ENCODE measurements at regions of chr4 and their contacts with region 1.

Region 1: GRCh38 chr4:22389240-22389870 is 126.5 kb downstream of the ADGRA3 start:
- DNase-seq: no peak
- H3K4me3 ChIP-seq: no peak overlapping the region
- H3K27ac ChIP-seq: no peak overlapping the region
- H3K4me1 ChIP-seq: peaks cover 0 to 16% (median 8%) of the 10 kb centered on the region in 4 donors
- H3K27me3 ChIP-seq: no peaks in the 10 kb centered on the region
- CTCF ChIP-seq: peak; percentile 52 to 80 (median 68)
- EP300 ChIP-seq: no peak
- POLR2A ChIP-seq: no peak

Region 2: GRCh38 chr4:21948347-21949072 is 440.8 kb before region 1 on chr4 and contains the start of gene KCNIP4:
- intact Hi-C with region 1: loop called (anchors 10 kb)
- DNase-seq: no peak
- H3K4me3 ChIP-seq: peak within 1 kb of the TSS; percentile 57 to 69 (median 60)
- H3K27ac ChIP-seq: peak within 1 kb of the TSS in 1 of 4 donors; percentile 56
- H3K4me1 ChIP-seq: peaks cover 0 to 13% (median 5%) of the 10 kb centered on the region in 4 donors
- H3K27me3 ChIP-seq: peaks cover 0 to 18% (median 0%) of the 10 kb centered on the region in 3 donors
- CTCF ChIP-seq: no peak
- EP300 ChIP-seq: no peak
- POLR2A ChIP-seq: no peak
- total RNA-seq, gene KCNIP4: 9.1 to 28.5 (median 19.4) TPM

Region 3: GRCh38 chr4:22539251-22539650 is 149.9 kb after region 1 on chr4:
- intact Hi-C with region 1: no loop called
- DNase-seq: no peak
- H3K4me3 ChIP-seq: no peak overlapping the region
- H3K27ac ChIP-seq: no peak overlapping the region
- H3K4me1 ChIP-seq: no peaks in the 10 kb centered on the region
- H3K27me3 ChIP-seq: no peaks in the 10 kb centered on the region
- CTCF ChIP-seq: no peak
- EP300 ChIP-seq: no peak
- POLR2A ChIP-seq: no peak